ENCODE measurements at regions of chr4 and their contacts with region 1.

Region 1: DNA sequence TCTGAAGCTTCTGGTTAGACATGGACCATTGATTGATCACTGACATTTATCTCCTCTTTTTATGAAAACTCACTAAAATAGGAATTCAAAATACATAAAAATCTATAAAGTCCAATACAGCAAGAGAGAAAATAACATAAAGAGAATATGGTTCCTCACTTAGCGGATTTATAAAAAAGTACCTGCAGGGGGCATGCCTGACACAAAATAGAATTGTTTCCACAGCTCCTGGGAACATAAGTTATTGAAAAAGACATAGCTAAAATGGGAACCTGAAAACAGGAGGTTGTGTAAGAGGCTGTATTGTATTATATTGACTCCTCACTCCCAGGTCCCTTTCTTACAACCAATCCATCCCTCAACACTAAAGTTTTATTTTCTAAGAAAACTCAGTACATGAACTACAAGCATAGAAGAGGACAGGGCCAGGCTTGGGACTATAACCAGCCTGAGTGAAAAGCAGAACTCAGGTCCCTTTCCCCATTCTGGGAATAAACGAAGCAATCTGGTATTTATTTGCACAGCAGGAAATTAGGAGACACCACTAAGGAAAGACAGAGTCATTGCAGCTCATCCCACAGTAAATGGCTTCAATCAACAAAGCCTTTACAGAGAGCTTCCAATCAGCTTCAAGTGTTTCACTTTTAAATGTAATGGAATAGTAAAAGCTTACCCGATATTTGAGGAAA is 121.1 kb upstream of the NDST4 start:
- DNase-seq: peak; percentile 42
- ATAC-seq: peak; percentile 56
- H3K4me3 ChIP-seq: no peak overlapping the region
- H3K27ac ChIP-seq: no peak overlapping the region
- H3K4me1 ChIP-seq: no peaks in the 10 kb centered on the region
- H3K27me3 ChIP-seq: no peaks in the 10 kb centered on the region
- CTCF ChIP-seq: peak; percentile 49

Region 2: DNA sequence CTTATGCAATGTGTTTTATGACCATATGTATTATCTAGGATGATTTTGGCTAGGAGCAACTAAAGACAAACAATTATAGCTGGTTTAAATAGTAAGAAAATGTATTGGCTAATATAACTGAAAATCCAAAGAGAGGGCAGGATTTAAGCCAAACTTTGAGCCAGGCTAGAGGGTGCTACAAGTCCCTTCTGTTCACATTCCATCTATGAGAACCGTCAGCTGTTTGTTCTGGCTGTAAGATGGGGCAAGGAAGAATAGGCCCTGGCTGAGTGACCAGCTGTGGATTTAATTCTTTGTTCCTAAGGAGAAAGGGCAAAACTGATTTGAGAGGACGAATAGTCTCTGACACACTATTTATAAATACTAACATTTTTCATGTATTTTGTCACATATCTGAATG is 715.2 kb before region 1 on chr4:
- CTCF ChIA-PET with region 1: no interaction called
- POLR2A ChIA-PET with region 1: no interaction called
- intact Hi-C with region 1: no loop called
- DNase-seq: no peak
- ATAC-seq: no peak
- H3K4me3 ChIP-seq: no peak overlapping the region
- H3K27ac ChIP-seq: no peak overlapping the region
- H3K4me1 ChIP-seq: no peaks in the 10 kb centered on the region
- H3K27me3 ChIP-seq: no peaks in the 10 kb centered on the region
- CTCF ChIP-seq: no peak

Region 3: GRCh38 chr4:114780205-114780604 is 454.3 kb before region 1 on chr4:
- CTCF ChIA-PET with region 1: no interaction called
- POLR2A ChIA-PET with region 1: no interaction called
- intact Hi-C with region 1: loop called (anchors 5 kb)
- DNase-seq: peak; percentile 36
- ATAC-seq: peak; percentile 64; the same call in 1 of the 2 replicates
- H3K4me3 ChIP-seq: no peak overlapping the region
- H3K27ac ChIP-seq: no peak overlapping the region
- H3K4me1 ChIP-seq: no peaks in the 10 kb centered on the region
- H3K27me3 ChIP-seq: no peaks in the 10 kb centered on the region
- CTCF ChIP-seq: peak; percentile 59

Region 4: DNA sequence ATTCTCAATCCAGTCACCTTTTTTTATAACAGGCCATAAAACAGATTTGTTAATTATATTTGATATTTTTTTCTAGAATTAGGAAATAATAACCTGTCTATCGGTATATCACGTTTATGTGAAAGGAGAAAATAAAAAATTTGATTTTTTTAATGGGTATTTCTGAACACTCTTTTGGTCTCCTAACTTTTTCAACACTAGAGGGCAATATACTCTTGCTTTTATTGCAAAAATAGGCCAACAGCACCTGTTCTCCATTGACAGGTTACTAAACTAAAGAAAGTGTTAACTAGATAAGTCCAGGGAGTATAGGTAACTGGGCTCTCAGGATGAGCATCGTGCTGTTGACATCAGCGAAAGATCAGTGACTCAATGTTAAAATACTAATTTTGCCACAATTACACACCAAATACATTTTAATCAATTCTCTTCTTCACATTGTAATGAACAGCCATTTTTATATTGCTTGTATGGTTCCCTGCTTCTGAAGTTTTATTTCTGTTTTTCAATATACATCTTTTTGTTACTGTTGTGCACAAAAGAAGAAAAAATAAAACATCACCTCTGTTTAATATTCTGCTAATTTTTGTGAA is 144.0 kb before region 1 on chr4:
- CTCF ChIA-PET with region 1: no interaction called
- POLR2A ChIA-PET with region 1: no interaction called
- intact Hi-C with region 1: loop called (anchors 10 kb)
- DNase-seq: peak; percentile 58
- ATAC-seq: no peak
- H3K4me3 ChIP-seq: no peak overlapping the region
- H3K27ac ChIP-seq: no peak overlapping the region
- H3K4me1 ChIP-seq: no peaks in the 10 kb centered on the region
- H3K27me3 ChIP-seq: no peaks in the 10 kb centered on the region
- CTCF ChIP-seq: peak; percentile 67

Region 5: GRCh38 chr4:115259642-115260041 is 25.1 kb after region 1 on chr4:
- CTCF ChIA-PET with region 1: no interaction called
- POLR2A ChIA-PET with region 1: no interaction called
- intact Hi-C with region 1: no loop called
- DNase-seq: no peak
- ATAC-seq: no peak
- H3K4me3 ChIP-seq: no peak overlapping the region
- H3K27ac ChIP-seq: no peak overlapping the region
- H3K4me1 ChIP-seq: no peaks in the 10 kb centered on the region
- H3K27me3 ChIP-seq: no peaks in the 10 kb centered on the region
- CTCF ChIP-seq: no peak

Region 6: GRCh38 chr4:115781528-115782146 is 547.1 kb after region 1 on chr4:
- CTCF ChIA-PET with region 1: no interaction called
- POLR2A ChIA-PET with region 1: no interaction called
- intact Hi-C with region 1: loop called (anchors 2 kb)
- DNase-seq: no peak
- ATAC-seq: no peak
- H3K4me3 ChIP-seq: no peak overlapping the region
- H3K27ac ChIP-seq: no peak overlapping the region
- H3K4me1 ChIP-seq: no peaks in the 10 kb centered on the region
- H3K27me3 ChIP-seq: no peaks in the 10 kb centered on the region
- CTCF ChIP-seq: no peak